ENCODE measurements at regions of chr10 and their contacts with region 1.

Region 1: DNA sequence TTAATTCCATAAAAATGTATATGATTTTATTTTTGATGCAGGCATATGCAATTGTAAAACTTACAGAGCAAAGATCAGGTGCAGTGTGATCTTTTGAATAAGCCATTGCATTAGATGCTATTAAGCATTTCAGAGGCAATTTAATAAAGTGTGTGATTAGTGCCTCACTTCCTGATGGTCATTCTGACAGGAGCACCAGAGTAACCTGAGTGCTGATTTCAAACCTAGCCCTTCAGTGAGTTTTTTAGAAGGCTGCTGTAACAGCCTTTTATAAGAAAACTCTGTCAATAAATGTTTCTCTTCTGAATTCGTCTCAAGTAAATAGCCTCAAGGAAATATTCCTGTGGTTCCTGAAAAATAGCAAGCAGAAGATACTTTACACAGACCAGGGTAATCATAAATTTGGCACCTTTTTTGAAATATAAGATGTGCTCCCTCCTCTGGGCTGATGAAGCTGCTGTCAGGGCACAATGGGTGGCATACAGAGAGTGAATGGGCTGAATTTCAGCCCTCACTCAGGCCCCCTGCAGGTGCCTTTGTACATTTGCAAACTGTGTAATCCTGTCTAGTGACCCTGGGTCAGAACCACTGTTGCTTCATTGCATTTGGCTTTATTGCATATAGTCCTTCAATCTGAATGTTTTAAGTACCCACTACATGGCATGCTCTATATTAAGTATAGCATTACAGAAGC is 193.7 kb upstream of the CSTF2T start:
- DNase-seq: no peak
- ATAC-seq: no peak
- H3K4me3 ChIP-seq: no peak overlapping the region
- H3K4me3 Mint-ChIP-seq: no peak overlapping the region
- H3K27ac ChIP-seq: no peak overlapping the region
- H3K27ac Mint-ChIP-seq: no peak overlapping the region
- H3K4me1 ChIP-seq: no peaks in the 10 kb centered on the region
- H3K4me1 Mint-ChIP-seq: no peaks in the 10 kb centered on the region
- H3K27me3 ChIP-seq: no peaks in the 10 kb centered on the region
- H3K27me3 Mint-ChIP-seq: no peaks in the 10 kb centered on the region
- CTCF ChIP-seq: no peak

Region 2: GRCh38 chr10:51653025-51653424 is 240.1 kb before region 1 on chr10:
- CTCF ChIA-PET with region 1: no interaction called
- POLR2A ChIA-PET with region 1: no interaction called
- intact Hi-C with region 1: no loop called
- DNase-seq: no peak
- ATAC-seq: no peak
- H3K4me3 ChIP-seq: no peak overlapping the region
- H3K4me3 Mint-ChIP-seq: no peak overlapping the region
- H3K27ac ChIP-seq: no peak overlapping the region
- H3K27ac Mint-ChIP-seq: no peak overlapping the region
- H3K4me1 ChIP-seq: no peaks in the 10 kb centered on the region
- H3K4me1 Mint-ChIP-seq: no peaks in the 10 kb centered on the region
- H3K27me3 ChIP-seq: no peaks in the 10 kb centered on the region
- H3K27me3 Mint-ChIP-seq: peaks cover 11% of the 10 kb centered on the region
- CTCF ChIP-seq: no peak

Region 3: GRCh38 chr10:51846856-51847506 is 46.1 kb before region 1 on chr10:
- CTCF ChIA-PET with region 1: no interaction called
- POLR2A ChIA-PET with region 1: no interaction called
- intact Hi-C with region 1: no loop called
- DNase-seq: no peak
- ATAC-seq: no peak
- H3K4me3 ChIP-seq: no peak overlapping the region
- H3K4me3 Mint-ChIP-seq: no peak overlapping the region
- H3K27ac ChIP-seq: no peak overlapping the region
- H3K27ac Mint-ChIP-seq: no peak overlapping the region
- H3K4me1 ChIP-seq: no peaks in the 10 kb centered on the region
- H3K4me1 Mint-ChIP-seq: no peaks in the 10 kb centered on the region
- H3K27me3 ChIP-seq: no peaks in the 10 kb centered on the region
- H3K27me3 Mint-ChIP-seq: no peaks in the 10 kb centered on the region
- CTCF ChIP-seq: no peak

Region 4: DNA sequence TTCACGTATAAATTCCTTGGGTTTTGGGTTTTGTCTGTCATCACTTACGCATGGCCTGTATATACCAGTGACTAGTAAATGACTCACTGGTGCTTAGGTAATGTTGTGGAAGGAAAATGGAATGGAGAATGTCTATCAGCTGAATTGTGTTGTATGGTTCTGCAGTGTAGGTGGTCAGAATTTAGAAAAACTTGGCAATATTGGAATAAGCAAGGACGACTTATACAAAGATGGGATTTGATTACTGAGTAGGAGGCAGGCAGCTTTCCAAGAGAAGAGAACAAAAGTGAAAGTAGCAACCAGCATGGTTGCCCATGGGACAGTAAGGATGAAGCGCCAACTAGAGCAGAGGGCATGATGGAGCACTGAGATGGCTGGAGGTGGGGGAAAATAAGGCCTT is 25.2 kb before region 1 on chr10:
- CTCF ChIA-PET with region 1: no interaction called
- POLR2A ChIA-PET with region 1: no interaction called
- intact Hi-C with region 1: loop called (anchors 2 kb)
- DNase-seq: no peak
- ATAC-seq: no peak
- H3K4me3 ChIP-seq: no peak overlapping the region
- H3K4me3 Mint-ChIP-seq: no peak overlapping the region
- H3K27ac ChIP-seq: no peak overlapping the region
- H3K27ac Mint-ChIP-seq: no peak overlapping the region
- H3K4me1 ChIP-seq: no peaks in the 10 kb centered on the region
- H3K4me1 Mint-ChIP-seq: no peaks in the 10 kb centered on the region
- H3K27me3 ChIP-seq: no peaks in the 10 kb centered on the region
- H3K27me3 Mint-ChIP-seq: no peaks in the 10 kb centered on the region
- CTCF ChIP-seq: no peak